Sciatic nerve (tissue), 2 donors: ENCODE measurements at regions of chr14 and their contacts with region 1.

Region 1: GRCh38 chr14:103546652-103547454 is 15.6 kb downstream of the BAG5 start:
- DNase-seq: peak; percentile 88
- ATAC-seq: peak; percentile 19

Region 2: GRCh38 chr14:101665515-101666078 is 1881.3 kb before region 1 on chr14:
- intact Hi-C with region 1: no loop called
- DNase-seq: no peak
- ATAC-seq: no peak

Region 3: GRCh38 chr14:102154821-102155549 is 1391.9 kb before region 1 on chr14:
- intact Hi-C with region 1: loop called (anchors 5 kb)
- DNase-seq: no peak
- ATAC-seq: no peak

Region 4: GRCh38 chr14:103500148-103500990 is 46.5 kb before region 1 on chr14:
- intact Hi-C with region 1: loop called (anchors 5 kb)
- DNase-seq: peak; percentile 94
- ATAC-seq: peak; percentile 96

Region 5: DNA sequence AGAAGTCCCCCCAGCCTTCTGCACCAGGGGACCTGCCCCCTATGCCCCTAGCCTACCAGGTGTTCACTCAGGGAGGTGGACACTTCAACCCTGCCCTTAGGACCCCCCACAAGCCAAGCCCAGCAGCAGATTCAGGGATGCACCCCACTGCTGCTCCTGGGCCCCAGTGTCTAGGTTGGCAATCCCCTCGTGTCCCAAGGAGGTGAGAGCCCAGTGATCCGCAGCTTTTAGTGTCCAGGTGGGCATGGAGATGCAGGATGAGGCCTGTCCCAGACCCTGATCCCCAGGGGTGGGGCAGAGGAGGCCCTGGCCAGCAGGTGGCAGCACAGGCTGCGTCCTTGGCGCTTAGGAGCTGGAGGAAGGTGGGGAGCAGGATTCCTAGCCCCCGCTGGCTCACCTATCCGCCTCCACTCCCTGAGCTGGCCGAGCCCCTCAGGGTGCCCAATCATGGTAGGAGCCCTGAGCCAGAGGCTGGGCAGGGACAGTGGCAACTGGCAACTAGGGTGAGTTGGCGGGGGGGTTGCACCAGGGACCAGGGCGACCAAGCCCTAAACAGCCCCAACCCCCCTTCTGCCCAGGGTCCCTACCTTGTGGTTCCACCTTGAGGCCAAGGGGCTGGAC is 28.3 kb before region 1 on chr14:
- intact Hi-C with region 1: loop called (anchors 2 kb)
- DNase-seq: peak; percentile 87
- ATAC-seq: peak; percentile 76

Region 6: DNA sequence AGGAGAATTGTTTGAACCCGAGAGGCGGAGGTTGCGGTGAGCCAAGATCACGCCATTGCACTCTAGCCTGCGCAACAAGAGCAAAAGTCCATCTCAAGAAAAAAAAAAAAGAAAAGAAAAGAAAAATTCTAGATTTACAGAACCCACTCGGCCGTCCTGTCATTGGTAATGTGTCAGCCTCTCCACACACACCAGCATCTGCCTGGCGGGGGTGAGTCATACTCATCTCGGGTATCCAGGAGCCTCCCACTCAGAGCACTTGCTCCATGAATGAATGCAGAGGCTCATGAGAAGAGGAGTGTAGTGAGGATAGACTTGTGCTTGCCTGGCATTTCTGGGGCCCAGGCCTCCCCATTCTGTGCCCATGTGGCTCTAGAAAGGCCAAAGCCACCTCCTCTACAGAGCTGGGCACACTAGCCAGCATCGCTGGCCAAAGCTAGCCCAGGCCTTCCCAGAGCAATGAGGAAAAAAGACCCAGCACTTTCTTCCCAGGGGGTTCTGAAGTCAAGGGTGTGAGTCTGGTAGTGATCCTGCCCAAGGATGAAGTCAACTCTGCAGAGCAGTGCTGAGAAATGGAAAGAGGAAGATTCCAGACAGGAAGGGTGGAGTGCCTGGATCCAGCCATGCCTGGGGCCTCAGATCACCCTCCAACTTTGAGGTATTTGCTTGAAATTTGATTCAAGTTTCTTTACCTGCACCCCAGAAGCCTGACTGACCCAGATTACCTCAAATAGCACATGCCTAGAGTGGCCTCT is 50.9 kb after region 1 on chr14:
- intact Hi-C with region 1: no loop called
- DNase-seq: no peak
- ATAC-seq: no peak